Aorta (tissue), 5 donors: ENCODE measurements at regions of chr20 and their contacts with region 1.

Region 1: GRCh38 chr20:49853640-49854039 is 41.0 kb downstream of the SLC9A8 start:
- DNase-seq: peak in 1 of 2 donors; percentile 69
- ATAC-seq: peak; percentile 35
- H3K4me3 ChIP-seq: no peak overlapping the region
- H3K27ac ChIP-seq: peak overlapping the region in 1 of 2 donors; percentile 69
- H3K4me1 ChIP-seq: peaks cover 3 to 14% of the 10 kb centered on the region in 2 donors
- H3K27me3 ChIP-seq: no peaks in the 10 kb centered on the region

Region 2: DNA sequence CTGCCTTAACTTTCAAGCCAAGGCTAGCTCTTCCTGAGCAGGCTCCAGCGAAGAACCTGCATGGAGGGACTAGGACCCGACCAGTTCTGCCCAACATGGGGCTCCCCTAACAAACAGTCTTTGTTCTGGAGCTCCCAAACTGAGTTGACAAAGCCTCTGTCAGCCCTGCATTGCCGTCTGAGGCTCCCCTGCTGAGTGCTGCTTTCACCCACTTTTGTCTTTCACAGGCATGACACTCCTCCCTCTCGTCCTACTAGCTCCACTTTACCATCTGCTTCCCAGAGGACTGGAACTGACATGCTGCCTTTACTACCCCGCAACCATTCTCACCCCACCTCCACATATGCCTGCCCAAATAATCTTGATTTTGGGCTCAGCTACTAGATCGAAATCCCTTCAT is 94.9 kb before region 1 on chr20:
- intact Hi-C with region 1: no loop called
- DNase-seq: no peak
- ATAC-seq: no peak
- H3K4me3 ChIP-seq: no peak overlapping the region
- H3K27ac ChIP-seq: no peak overlapping the region
- H3K4me1 ChIP-seq: no peaks in the 10 kb centered on the region
- H3K27me3 ChIP-seq: no peaks in the 10 kb centered on the region

Region 3: GRCh38 chr20:49880177-49880576 is 26.5 kb after region 1 on chr20:
- intact Hi-C with region 1: loop called (anchors 1 to 5 kb)
- DNase-seq: no peak
- ATAC-seq: peak; percentile 35
- H3K4me3 ChIP-seq: no peak overlapping the region
- H3K27ac ChIP-seq: peak overlapping the region in 1 of 2 donors; percentile 52
- H3K4me1 ChIP-seq: peaks cover 0 to 2% of the 10 kb centered on the region in 2 donors
- H3K27me3 ChIP-seq: no peaks in the 10 kb centered on the region

Region 4: GRCh38 chr20:49888345-49888966 is 34.8 kb after region 1 on chr20:
- intact Hi-C with region 1: loop called in 1 of 2 experiments (anchors 5 kb)
- DNase-seq: no peak
- ATAC-seq: peak; percentile 55
- H3K4me3 ChIP-seq: no peak overlapping the region
- H3K27ac ChIP-seq: peak overlapping the region in 1 of 2 donors; percentile 14
- H3K4me1 ChIP-seq: no peaks in the 10 kb centered on the region
- H3K27me3 ChIP-seq: no peaks in the 10 kb centered on the region